ENCODE measurements at regions of chr7 and their contacts with region 1.

Region 1: GRCh38 chr7:47786557-47787248 is 161.6 kb downstream of the PKD1L1 start:
- DNase-seq: peak; percentile 85 to 87
- ATAC-seq: peak; percentile 89
- H3K4me3 ChIP-seq: no peak overlapping the region
- H3K27ac ChIP-seq: peak overlapping the region; percentile 87 to 93
- H3K4me1 ChIP-seq: peaks cover 5 to 16% of the 10 kb centered on the region in 2 donors
- H3K27me3 ChIP-seq: no peaks in the 10 kb centered on the region

Region 2: DNA sequence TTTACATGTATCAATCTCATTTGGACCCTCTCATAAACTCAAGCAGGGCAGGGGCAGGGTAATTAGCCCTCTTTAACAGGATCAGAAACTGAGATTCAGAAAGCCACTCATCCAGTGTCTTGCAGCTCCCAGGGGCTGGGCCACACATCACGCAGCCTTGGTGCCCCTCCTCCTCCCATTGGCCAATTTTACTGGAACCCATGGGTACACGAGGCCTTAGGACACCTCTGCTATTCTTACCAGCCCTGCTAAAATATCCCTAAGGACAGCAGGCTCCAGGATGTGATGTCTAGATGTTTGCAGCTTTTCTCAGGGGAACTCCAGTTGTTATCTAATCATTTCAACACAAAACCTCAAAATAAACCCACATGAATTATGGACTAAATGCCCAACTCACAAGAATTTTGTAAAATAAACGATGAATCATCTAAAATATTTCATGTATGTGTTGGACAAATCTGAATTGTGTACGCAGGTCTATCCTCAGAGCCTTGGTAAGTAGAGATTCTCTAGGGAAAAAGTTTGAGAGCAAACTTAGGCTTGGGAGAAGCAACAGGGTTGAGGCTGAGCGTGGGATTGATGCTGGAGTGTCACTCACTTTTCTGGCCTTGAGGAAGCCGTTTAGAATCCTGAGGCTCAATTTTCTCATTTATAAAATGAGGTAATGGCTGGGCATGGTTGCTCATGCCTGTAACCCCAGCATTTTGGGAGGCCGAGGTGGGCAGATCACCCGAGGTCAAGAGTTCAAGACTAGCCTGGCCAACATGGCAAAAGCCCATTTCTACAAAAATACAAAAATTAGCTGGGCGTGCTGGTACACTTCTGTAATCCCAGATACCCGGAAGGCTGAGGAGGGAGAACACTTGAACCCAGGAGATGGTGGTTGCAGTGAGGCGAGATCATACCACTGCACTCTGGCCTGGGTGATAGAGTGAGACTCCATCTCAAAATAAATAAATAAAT is 135.1 kb before region 1 on chr7:
- intact Hi-C with region 1: loop called in 1 of 2 experiments (anchors 5 kb)
- DNase-seq: peak in 1 of 2 donors; percentile 73
- ATAC-seq: peak; percentile 64
- H3K4me3 ChIP-seq: no peak overlapping the region
- H3K27ac ChIP-seq: peak overlapping the region in 1 of 2 donors; percentile 83
- H3K4me1 ChIP-seq: peaks cover 0 to 2% of the 10 kb centered on the region in 2 donors
- H3K27me3 ChIP-seq: no peaks in the 10 kb centered on the region

Measured in aorta (tissue), 5 donors.